H1 (cell line): ENCODE measurements at regions of chr14 and their contacts with region 1.

Region 1: DNA sequence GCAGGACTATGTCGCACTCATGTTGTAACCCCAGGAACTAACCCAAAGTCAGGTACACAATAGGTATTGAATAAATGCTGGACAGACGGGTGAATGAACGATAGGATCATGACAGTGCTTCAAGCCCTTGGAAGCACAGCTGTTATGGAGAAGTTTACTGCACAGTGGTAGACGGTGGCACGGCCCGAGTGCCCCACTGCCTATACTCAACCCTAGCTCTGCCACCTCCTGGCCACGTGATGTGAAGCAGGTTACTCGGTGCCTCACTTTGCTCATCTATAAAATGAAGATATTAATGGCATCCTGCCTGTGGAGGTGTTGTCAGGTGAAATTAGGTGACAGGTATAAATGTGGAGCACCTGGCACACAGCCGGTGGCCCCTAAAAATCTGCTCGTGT is 5.8 kb downstream of the ASB2 start:
- DNase-seq: no peak
- H3K4me3 ChIP-seq: no peak overlapping the region
- H3K27ac ChIP-seq: no peak overlapping the region
- H3K4me1 ChIP-seq: peaks cover 0 to 1% (median 0%) of the 10 kb centered on the region in 4 experiments; a peak in 1 of 7 replicates
- H3K27me3 ChIP-seq: no peaks in the 10 kb centered on the region
- CTCF ChIP-seq: peak; percentile 59 to 70 (median 61)
- EP300 ChIP-seq: no peak
- POLR2A ChIP-seq: no peak
- RAD21 ChIP-seq: peak; percentile 53 to 71

Region 2: DNA sequence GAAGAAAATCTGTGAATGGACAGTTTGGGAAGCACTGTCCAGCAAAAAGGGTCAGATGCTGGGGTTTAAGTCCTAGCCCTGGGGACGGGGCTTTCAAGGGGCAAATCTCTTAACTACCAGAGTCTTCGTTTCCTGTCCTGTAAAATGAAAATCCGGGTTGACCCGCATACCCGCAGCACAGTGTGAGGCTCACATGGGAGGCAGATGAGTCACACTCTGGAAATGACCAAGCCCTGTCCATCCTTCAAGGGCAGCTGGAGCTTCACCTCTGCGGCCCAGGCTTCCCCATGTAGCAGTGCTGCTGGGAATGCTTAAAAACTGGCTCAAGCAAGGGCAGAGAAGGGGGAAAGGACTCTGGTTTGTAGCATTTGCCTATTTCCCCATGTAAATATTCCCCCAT is 24.4 kb before region 1 on chr14:
- CTCF ChIA-PET with region 1: interaction called, 57 read pairs
- POLR2A ChIA-PET with region 1: interaction called, 4 read pairs
- DNase-seq: no peak
- H3K4me3 ChIP-seq: no peak overlapping the region
- H3K27ac ChIP-seq: no peak overlapping the region
- H3K4me1 ChIP-seq: peaks cover 0 to 9% (median 4%) of the 10 kb centered on the region in 4 experiments; a peak in 3 of 7 replicates
- H3K27me3 ChIP-seq: no peaks in the 10 kb centered on the region
- CTCF ChIP-seq: no peak
- EP300 ChIP-seq: no peak
- POLR2A ChIP-seq: no peak
- RAD21 ChIP-seq: no peak

Region 3: GRCh38 chr14:93959239-93960107 is 11.1 kb before region 1 on chr14:
- CTCF ChIA-PET with region 1: interaction called, 57 read pairs
- POLR2A ChIA-PET with region 1: interaction called, 3 read pairs
- DNase-seq: peak in 1 of 2 experiments; percentile 61
- H3K4me3 ChIP-seq: no peak overlapping the region
- H3K27ac ChIP-seq: no peak overlapping the region; the same call in 1 of the 2 replicates
- H3K4me1 ChIP-seq: peaks cover 0 to 9% (median 7%) of the 10 kb centered on the region in 4 experiments; a peak in 5 of 7 replicates
- H3K27me3 ChIP-seq: peaks cover 0 to 1% (median 0%) of the 10 kb centered on the region in 4 experiments; a peak in 1 of 7 replicates
- CTCF ChIP-seq: no peak
- EP300 ChIP-seq: no peak
- POLR2A ChIP-seq: no peak
- RAD21 ChIP-seq: no peak

Region 4: GRCh38 chr14:93984987-93985410 is 14.5 kb after region 1 on chr14:
- CTCF ChIA-PET with region 1: interaction called, 81 read pairs
- POLR2A ChIA-PET with region 1: no interaction called
- DNase-seq: peak in 1 of 2 experiments; percentile 65
- H3K4me3 ChIP-seq: no peak overlapping the region
- H3K27ac ChIP-seq: no peak overlapping the region
- H3K4me1 ChIP-seq: peaks cover 0 to 14% (median 8%) of the 10 kb centered on the region in 4 experiments; a peak in 4 of 7 replicates
- H3K27me3 ChIP-seq: no peaks in the 10 kb centered on the region; a peak in 1 of 7 replicates
- CTCF ChIP-seq: peak; percentile 50 to 64 (median 62)
- EP300 ChIP-seq: no peak
- POLR2A ChIP-seq: no peak
- RAD21 ChIP-seq: peak; percentile 11 to 50; a peak in 2 of 4 replicates